Endothelial cell of umbilical vein (primary cell): ENCODE measurements at regions of chr2 and their contacts with region 1.

Region 1: GRCh38 chr2:70340921-70341765 is 39.3 kb upstream of the FAM136A start:
- DNase-seq: peak; percentile 55
- H3K4me3 ChIP-seq: no peak overlapping the region
- H3K27ac ChIP-seq: no peak overlapping the region
- H3K4me1 ChIP-seq: no peaks in the 10 kb centered on the region
- H3K27me3 ChIP-seq: no peaks in the 10 kb centered on the region
- CTCF ChIP-seq: peak; percentile 71 to 82
- POLR2A ChIP-seq: no peak

Region 2: GRCh38 chr2:70647873-70648481 is 306.8 kb after region 1 on chr2:
- CTCF ChIA-PET with region 1: interaction called, 10 read pairs
- POLR2A ChIA-PET with region 1: no interaction called
- dilution Hi-C with region 1: no loop called
- intact Hi-C with region 1: loop called (anchors 1 kb)
- DNase-seq: peak; percentile 77
- H3K4me3 ChIP-seq: no peak overlapping the region
- H3K27ac ChIP-seq: no peak overlapping the region
- H3K4me1 ChIP-seq: no peaks in the 10 kb centered on the region
- H3K27me3 ChIP-seq: peaks cover 0 to 9% of the 10 kb centered on the region in 2 experiments
- CTCF ChIP-seq: peak; percentile 95 to 98
- POLR2A ChIP-seq: no peak

Region 3: DNA sequence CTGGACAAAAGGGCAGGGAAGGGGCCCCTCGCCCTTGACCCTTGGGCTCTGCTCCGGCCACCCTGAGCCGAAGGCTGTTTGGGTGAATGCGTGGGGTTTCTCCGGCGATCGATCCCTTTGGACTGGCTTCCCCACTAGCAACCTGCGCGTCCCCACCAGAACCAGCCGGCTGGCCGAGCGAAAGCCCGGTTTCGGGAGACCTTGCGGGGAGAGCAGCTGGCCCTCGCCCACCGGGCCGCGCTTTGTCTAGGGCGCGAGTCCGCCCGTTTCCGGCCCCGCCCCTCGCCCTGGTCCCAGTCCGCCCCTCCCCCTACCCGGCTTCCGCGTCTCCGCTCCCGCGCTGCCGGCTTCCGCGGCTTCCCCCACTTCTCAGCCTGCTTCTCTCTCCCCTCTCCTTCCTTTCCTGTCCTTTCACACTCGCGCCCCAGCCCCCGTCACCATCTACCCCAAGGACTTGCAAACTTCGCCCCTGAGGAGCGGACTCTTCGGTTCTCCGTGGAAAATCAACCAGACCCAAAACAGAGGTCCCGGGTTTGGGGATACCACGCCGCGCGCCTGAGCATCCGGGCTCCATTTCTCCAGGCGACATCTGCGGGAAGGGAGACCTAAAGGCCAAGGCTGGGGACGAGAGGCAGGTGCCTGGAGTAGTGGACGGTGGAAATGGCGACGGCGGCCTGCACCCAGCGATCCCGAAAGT is 546.6 kb after region 1 on chr2:
- CTCF ChIA-PET with region 1: no interaction called
- POLR2A ChIA-PET with region 1: no interaction called
- dilution Hi-C with region 1: no loop called
- intact Hi-C with region 1: no loop called
- DNase-seq: no peak
- H3K4me3 ChIP-seq: peak overlapping the region in 1 of 3 experiments; percentile 11
- H3K27ac ChIP-seq: no peak overlapping the region
- H3K4me1 ChIP-seq: peaks cover 8% of the 10 kb centered on the region
- H3K27me3 ChIP-seq: peaks cover 82 to 100% of the 10 kb centered on the region in 2 experiments
- CTCF ChIP-seq: no peak
- POLR2A ChIP-seq: no peak